CD4-positive, alpha-beta T cell (primary cell): ENCODE measurements at regions of chr10 and their contacts with region 1.

Region 1: GRCh38 chr10:113007032-113007771 is 57.2 kb downstream of the TCF7L2 start:
- DNase-seq: peak; percentile 0 to 85 (median 18)
- ATAC-seq: peak; percentile 96
- H3K4me3 ChIP-seq: peak overlapping the region; percentile 28
- H3K4me3 Mint-ChIP-seq: peak overlapping the region; percentile 66
- H3K27ac ChIP-seq: no peak overlapping the region
- H3K27ac Mint-ChIP-seq: peak overlapping the region; percentile 25
- H3K4me1 ChIP-seq: peaks cover 35% of the 10 kb centered on the region
- H3K4me1 Mint-ChIP-seq: peaks cover 40% of the 10 kb centered on the region
- H3K27me3 ChIP-seq: peaks cover 5 to 34% of the 10 kb centered on the region in 2 experiments
- H3K27me3 Mint-ChIP-seq: peaks cover 67% of the 10 kb centered on the region
- CTCF ChIP-seq: no peak

Region 2: DNA sequence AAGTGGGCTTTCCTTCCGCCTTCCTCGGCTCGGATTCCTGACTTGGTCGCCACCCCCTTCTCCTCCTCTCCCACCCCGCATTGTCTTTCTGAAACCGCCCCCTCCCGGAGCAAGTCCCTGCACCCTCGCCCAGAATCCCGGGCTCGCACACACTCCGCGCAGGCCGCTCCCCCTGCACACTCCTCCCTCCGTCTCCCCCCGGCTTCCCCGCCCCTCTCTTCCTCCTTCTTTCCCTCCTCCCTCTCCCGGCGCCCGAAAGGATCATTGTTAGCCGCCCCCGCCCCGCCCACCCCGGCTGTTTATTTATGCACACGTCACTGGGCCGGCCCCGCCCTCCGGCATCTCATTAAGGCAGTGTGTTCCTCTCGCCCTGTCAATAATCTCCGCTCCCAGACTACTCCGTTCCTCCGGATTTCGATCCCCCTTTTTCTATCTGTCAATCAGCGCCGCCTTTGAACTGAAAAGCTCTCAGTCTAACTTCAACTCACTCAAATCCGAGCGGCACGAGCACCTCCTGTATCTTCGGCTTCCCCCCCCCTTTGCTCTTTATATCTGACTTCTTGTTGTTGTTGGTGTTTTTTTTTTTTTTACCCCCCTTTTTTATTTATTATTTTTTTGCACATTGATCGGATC is 57.2 kb before region 1 on chr10 and contains the start of gene TCF7L2:
- CTCF ChIA-PET with region 1: no interaction called
- POLR2A ChIA-PET with region 1: no interaction called
- intact Hi-C with region 1: loop called (anchors 5 kb)
- DNase-seq: peak; percentile 21 to 86 (median 49)
- ATAC-seq: peak; percentile 63
- H3K4me3 ChIP-seq: peak within 1 kb of the TSS; percentile 72
- H3K4me3 Mint-ChIP-seq: peak within 1 kb of the TSS; percentile 95
- H3K27ac ChIP-seq: no peak within 1 kb of the TSS
- H3K27ac Mint-ChIP-seq: peak within 1 kb of the TSS; percentile 79
- H3K4me1 ChIP-seq: peaks cover 25% of the 10 kb centered on the region
- H3K4me1 Mint-ChIP-seq: peaks cover 33% of the 10 kb centered on the region
- H3K27me3 ChIP-seq: peaks cover 7 to 36% of the 10 kb centered on the region in 2 experiments
- H3K27me3 Mint-ChIP-seq: peaks cover 51% of the 10 kb centered on the region
- CTCF ChIP-seq: no peak
- total RNA-seq, gene TCF7L2: 4.2 to 4.4 TPM

Region 3: GRCh38 chr10:112985690-112986543 is 21.3 kb before region 1 on chr10:
- CTCF ChIA-PET with region 1: no interaction called
- POLR2A ChIA-PET with region 1: no interaction called
- intact Hi-C with region 1: loop called in 1 of 2 experiments (anchors 1 kb)
- DNase-seq: peak in 3 of 14 experiments; percentile 4 to 40 (median 39)
- ATAC-seq: no peak
- H3K4me3 ChIP-seq: no peak overlapping the region
- H3K4me3 Mint-ChIP-seq: no peak overlapping the region
- H3K27ac ChIP-seq: no peak overlapping the region
- H3K27ac Mint-ChIP-seq: no peak overlapping the region
- H3K4me1 ChIP-seq: peaks cover 6% of the 10 kb centered on the region
- H3K4me1 Mint-ChIP-seq: peaks cover 31% of the 10 kb centered on the region
- H3K27me3 ChIP-seq: peaks cover 6 to 48% of the 10 kb centered on the region in 2 experiments
- H3K27me3 Mint-ChIP-seq: peaks cover 68% of the 10 kb centered on the region
- CTCF ChIP-seq: no peak

Region 4: DNA sequence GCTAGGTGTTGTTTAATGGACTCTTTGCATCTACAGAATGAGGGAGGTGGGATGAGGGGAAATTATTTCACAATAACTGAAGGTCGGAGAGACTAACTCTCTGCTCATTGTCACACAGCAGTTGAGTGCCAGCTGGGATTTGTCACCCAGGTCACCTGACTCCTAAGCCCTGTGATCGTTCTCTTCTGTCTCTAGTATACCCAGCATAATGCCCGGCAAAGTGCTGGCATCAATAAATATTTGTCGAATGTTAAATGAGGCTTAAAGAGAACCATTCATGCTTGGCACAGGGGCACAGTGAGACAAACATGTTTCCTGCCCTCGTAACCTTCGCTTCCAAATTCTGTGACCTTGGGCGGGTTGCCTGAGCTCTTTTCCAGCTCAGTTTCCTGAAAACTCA is 13.6 kb after region 1 on chr10:
- CTCF ChIA-PET with region 1: no interaction called
- POLR2A ChIA-PET with region 1: no interaction called
- intact Hi-C with region 1: no loop called
- DNase-seq: no peak
- ATAC-seq: no peak
- H3K4me3 ChIP-seq: no peak overlapping the region
- H3K4me3 Mint-ChIP-seq: no peak overlapping the region
- H3K27ac ChIP-seq: no peak overlapping the region
- H3K27ac Mint-ChIP-seq: no peak overlapping the region
- H3K4me1 ChIP-seq: no peaks in the 10 kb centered on the region
- H3K4me1 Mint-ChIP-seq: no peaks in the 10 kb centered on the region
- H3K27me3 ChIP-seq: no peaks in the 10 kb centered on the region
- H3K27me3 Mint-ChIP-seq: peaks cover 9% of the 10 kb centered on the region
- CTCF ChIP-seq: no peak

Region 5: DNA sequence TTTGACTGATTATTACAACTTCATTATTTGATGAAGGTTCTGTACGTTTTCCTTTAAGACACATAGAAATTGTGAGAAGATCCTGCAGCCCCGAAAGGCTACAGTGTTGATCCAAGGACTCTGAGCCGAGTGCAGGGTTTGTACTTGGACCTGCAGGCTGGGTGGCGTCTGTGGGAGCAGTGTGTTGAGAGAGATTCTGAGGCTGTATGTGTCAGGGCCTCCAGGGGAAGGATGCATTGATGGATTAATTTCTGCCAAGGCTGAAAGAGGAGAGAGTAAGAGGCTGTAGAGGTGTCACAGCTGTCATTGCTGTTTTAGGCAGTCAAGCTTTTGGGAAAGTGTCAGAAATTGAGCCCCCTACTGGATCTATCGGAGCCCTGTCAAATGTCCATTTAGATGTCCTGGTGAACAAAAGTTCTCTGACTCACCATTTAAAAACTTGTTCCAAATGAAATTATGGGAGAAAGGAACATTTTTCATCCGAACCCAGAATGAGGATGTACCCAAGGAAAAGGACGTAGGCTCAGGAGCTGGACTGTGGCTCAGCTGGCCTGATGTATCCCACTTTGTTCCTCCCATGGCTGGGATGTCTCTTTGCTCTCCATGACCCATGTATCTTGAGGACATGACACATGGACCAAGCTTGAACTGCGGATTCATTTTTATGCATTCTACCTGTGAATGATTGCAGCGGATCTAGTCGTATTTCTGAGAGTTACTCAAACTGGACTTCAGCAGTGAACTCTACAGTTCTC is 45.1 kb after region 1 on chr10:
- CTCF ChIA-PET with region 1: no interaction called
- POLR2A ChIA-PET with region 1: no interaction called
- intact Hi-C with region 1: loop called in 1 of 2 experiments (anchors 5 kb)
- DNase-seq: no peak
- ATAC-seq: no peak
- H3K4me3 ChIP-seq: no peak overlapping the region
- H3K4me3 Mint-ChIP-seq: no peak overlapping the region
- H3K27ac ChIP-seq: no peak overlapping the region
- H3K27ac Mint-ChIP-seq: no peak overlapping the region
- H3K4me1 ChIP-seq: peaks cover 15% of the 10 kb centered on the region
- H3K4me1 Mint-ChIP-seq: peaks cover 38% of the 10 kb centered on the region
- H3K27me3 ChIP-seq: no peaks in the 10 kb centered on the region
- H3K27me3 Mint-ChIP-seq: peaks cover 21% of the 10 kb centered on the region
- CTCF ChIP-seq: no peak